Prostate gland (tissue), 2 donors: ENCODE measurements at regions of chr9 and their contacts with region 1.

Region 1: GRCh38 chr9:88991066-88992034 is at the start of gene S1PR3:
- DNase-seq: peak; percentile 69
- H3K4me3 ChIP-seq: peak within 1 kb of the TSS; percentile 54 to 64
- H3K27ac ChIP-seq: peak within 1 kb of the TSS; percentile 68 to 71
- H3K4me1 ChIP-seq: no peaks in the 10 kb centered on the region
- H3K27me3 ChIP-seq: no peaks in the 10 kb centered on the region
- CTCF ChIP-seq: peak in 1 of 4 experiments; percentile 5
- POLR2A ChIP-seq: peak; percentile 78
- total RNA-seq, gene S1PR3: 8.2 to 16.3 TPM

Region 2: DNA sequence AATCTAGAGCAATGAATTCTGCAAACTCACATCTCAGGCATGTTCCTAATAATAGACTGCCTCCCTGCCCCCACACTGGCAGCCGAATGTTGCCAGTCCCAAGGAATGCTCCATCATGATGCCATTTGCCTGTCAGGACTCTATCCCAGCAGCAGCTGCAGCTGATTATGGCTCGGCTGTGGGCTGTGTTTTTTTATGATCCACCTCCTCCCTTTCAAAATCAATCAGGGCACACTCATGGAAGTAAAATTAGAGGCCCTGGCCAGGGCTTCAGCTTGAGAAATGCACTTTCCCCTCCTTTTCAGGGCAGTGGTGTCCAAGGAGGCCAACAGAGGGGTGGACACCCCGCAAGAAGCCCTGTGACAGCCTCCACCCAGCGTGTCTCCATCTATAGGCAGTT is 176.8 kb before region 1 on chr9:
- intact Hi-C with region 1: loop called (anchors 10 kb)
- DNase-seq: no peak
- H3K4me3 ChIP-seq: no peak overlapping the region
- H3K27ac ChIP-seq: no peak overlapping the region
- H3K4me1 ChIP-seq: no peaks in the 10 kb centered on the region
- H3K27me3 ChIP-seq: no peaks in the 10 kb centered on the region
- CTCF ChIP-seq: no peak
- POLR2A ChIP-seq: no peak

Region 3: GRCh38 chr9:88922031-88922430 is 69.3 kb before region 1 on chr9:
- intact Hi-C with region 1: no loop called
- DNase-seq: no peak
- H3K4me3 ChIP-seq: no peak overlapping the region
- H3K27ac ChIP-seq: no peak overlapping the region
- H3K4me1 ChIP-seq: no peaks in the 10 kb centered on the region
- H3K27me3 ChIP-seq: no peaks in the 10 kb centered on the region
- CTCF ChIP-seq: no peak
- POLR2A ChIP-seq: no peak

Region 4: DNA sequence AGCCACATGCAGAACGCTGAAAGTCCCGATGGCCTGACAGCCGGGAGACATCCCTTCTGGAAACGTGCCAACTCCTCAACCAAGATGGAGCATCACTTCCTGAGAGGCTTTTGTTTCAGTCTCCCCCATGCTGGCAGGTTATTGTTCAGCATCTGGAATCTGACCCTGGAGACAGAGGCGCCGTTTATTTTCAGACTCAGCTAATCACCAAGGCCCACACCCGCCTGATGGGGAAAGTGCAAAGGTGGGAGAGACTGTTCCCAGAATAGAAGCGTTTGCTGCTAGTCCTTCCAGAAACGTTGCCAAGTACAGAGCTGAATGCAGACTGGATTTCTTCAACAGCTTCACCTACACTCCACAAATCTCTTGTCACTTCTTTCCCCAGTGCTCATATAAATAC is 41.9 kb before region 1 on chr9:
- intact Hi-C with region 1: loop called (anchors 2 kb)
- DNase-seq: no peak
- H3K4me3 ChIP-seq: no peak overlapping the region
- H3K27ac ChIP-seq: no peak overlapping the region
- H3K4me1 ChIP-seq: no peaks in the 10 kb centered on the region
- H3K27me3 ChIP-seq: no peaks in the 10 kb centered on the region
- CTCF ChIP-seq: no peak
- POLR2A ChIP-seq: no peak

Region 5: DNA sequence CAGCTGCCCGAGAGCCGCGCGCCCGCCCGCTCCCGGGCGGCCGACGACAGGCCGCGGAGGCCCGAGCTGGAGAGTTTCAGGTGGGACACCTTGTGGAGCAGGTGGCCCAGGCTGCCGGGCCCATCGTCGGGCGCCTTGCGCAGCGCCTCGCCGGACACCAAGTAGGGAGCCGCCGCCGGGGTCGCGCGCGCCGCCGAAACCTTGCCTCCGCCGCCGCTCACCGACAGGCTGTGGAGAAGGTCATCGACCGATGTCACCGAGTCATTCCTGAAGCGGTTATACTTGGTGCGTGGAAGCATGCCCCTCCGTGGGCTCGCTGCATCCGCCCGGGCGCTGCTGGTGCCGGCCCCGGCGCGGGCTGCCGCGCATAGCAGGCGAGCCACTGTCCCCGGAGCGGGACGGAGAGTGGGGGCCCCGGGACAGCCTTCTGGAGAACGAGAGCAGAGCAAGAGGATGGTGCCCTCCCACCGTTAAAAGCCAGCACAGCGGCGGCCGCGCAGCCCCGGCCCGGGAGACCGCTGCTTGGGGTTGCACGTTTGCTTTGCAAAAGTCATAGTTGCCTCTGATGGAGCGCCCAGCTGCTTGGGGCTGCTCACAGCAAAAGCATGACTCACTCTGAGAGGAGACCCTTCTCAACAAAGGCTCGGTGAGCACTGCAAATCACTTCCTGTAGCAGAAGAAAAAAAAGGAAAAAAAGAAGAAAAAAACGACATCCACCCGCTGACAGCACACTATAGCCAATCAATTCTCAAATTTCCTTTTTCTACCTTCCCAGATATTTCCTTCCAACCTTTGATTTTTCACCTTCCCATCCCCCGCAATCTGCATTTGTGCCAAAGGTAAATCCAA is 187.0 kb after region 1 on chr9 and contains the start of gene SHC3:
- intact Hi-C with region 1: no loop called
- DNase-seq: no peak
- H3K4me3 ChIP-seq: peak within 1 kb of the TSS; percentile 24 to 32
- H3K27ac ChIP-seq: peak within 1 kb of the TSS; percentile 61 to 70
- H3K4me1 ChIP-seq: no peaks in the 10 kb centered on the region
- H3K27me3 ChIP-seq: peaks cover 6% of the 10 kb centered on the region
- CTCF ChIP-seq: no peak
- POLR2A ChIP-seq: no peak
- total RNA-seq, gene SHC3: 0.34 to 0.59 TPM